Lower lobe of right lung (tissue), 2 donors: ENCODE measurements at regions of chr20 and their contacts with region 1.

Region 1: GRCh38 chr20:33465481-33466302 is 22.1 kb upstream of the SNTA1 start:
- DNase-seq: no peak
- ATAC-seq: no peak
- H3K4me3 ChIP-seq: no peak overlapping the region
- H3K27ac ChIP-seq: no peak overlapping the region
- H3K4me1 ChIP-seq: no peaks in the 10 kb centered on the region
- H3K27me3 ChIP-seq: no peaks in the 10 kb centered on the region
- CTCF ChIP-seq: no peak

Region 2: GRCh38 chr20:33332905-33333456 is 132.7 kb before region 1 on chr20:
- intact Hi-C with region 1: no loop called
- DNase-seq: no peak
- ATAC-seq: no peak
- H3K4me3 ChIP-seq: no peak overlapping the region
- H3K27ac ChIP-seq: no peak overlapping the region
- H3K4me1 ChIP-seq: no peaks in the 10 kb centered on the region
- H3K27me3 ChIP-seq: no peaks in the 10 kb centered on the region
- CTCF ChIP-seq: no peak

Region 3: GRCh38 chr20:33387177-33387576 is 78.5 kb before region 1 on chr20:
- intact Hi-C with region 1: no loop called
- DNase-seq: no peak
- ATAC-seq: no peak
- H3K4me3 ChIP-seq: no peak overlapping the region
- H3K27ac ChIP-seq: no peak overlapping the region
- H3K4me1 ChIP-seq: no peaks in the 10 kb centered on the region
- H3K27me3 ChIP-seq: no peaks in the 10 kb centered on the region
- CTCF ChIP-seq: no peak

Region 4: DNA sequence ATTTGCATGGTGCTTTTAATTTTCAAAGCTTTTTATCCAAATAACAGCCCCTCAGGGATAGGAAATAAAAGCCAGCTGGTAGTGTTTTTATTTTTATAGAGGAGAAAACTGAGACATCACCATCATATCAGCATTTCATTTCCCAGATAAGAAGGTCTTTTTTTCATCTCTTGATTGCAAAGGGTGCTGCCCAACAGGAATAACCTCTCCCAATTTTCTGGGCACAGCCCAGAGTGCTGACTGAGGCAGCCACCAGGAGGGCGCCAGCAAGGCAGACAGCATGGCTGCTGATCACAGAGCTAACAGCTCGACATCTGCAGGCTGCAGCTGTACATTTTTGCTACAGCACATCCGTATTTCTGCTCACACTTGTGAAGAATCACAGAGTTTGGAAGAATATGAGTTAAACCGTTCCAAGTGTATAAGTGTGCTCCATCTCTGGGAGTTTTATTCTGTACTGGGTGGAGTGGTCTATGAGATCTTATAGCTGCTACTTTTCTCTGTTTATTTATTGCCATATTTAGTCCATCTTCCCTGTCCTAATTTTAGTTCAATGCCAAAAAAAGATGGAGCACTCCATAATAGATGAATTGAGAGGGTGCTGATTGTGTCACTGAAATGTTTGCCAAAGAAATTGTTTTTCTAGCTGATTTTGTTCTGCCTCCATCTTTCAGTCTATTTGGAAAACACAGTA is 110.9 kb after region 1 on chr20:
- intact Hi-C with region 1: no loop called
- DNase-seq: no peak
- ATAC-seq: no peak
- H3K4me3 ChIP-seq: no peak overlapping the region
- H3K27ac ChIP-seq: no peak overlapping the region
- H3K4me1 ChIP-seq: peaks cover 10% of the 10 kb centered on the region
- H3K27me3 ChIP-seq: no peaks in the 10 kb centered on the region
- CTCF ChIP-seq: no peak

Region 5: DNA sequence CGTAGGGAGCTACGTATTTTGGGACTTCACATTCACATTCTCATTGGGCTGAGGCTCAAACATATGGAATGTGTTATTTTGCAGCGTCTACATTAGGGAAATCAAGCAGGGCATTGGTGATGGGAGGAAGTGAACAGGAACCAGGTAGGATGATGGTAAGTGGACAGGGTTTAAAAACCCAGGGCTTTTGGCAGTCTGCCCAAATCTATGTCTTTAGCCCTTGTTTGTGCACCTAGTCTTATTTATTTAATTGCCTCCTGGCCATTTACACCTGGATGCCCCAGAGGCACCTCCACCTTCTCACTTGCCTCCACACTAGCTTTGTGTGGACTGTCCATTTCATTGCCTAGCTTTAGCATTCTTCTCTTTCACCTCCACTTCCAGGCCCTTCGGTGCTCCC is 173.0 kb after region 1 on chr20:
- intact Hi-C with region 1: loop called (anchors 10 kb)
- DNase-seq: no peak
- ATAC-seq: no peak
- H3K4me3 ChIP-seq: no peak overlapping the region
- H3K27ac ChIP-seq: no peak overlapping the region
- H3K4me1 ChIP-seq: no peaks in the 10 kb centered on the region
- H3K27me3 ChIP-seq: no peaks in the 10 kb centered on the region
- CTCF ChIP-seq: no peak